ENCODE measurements at regions of chr3 and their contacts with region 1.

Region 1: DNA sequence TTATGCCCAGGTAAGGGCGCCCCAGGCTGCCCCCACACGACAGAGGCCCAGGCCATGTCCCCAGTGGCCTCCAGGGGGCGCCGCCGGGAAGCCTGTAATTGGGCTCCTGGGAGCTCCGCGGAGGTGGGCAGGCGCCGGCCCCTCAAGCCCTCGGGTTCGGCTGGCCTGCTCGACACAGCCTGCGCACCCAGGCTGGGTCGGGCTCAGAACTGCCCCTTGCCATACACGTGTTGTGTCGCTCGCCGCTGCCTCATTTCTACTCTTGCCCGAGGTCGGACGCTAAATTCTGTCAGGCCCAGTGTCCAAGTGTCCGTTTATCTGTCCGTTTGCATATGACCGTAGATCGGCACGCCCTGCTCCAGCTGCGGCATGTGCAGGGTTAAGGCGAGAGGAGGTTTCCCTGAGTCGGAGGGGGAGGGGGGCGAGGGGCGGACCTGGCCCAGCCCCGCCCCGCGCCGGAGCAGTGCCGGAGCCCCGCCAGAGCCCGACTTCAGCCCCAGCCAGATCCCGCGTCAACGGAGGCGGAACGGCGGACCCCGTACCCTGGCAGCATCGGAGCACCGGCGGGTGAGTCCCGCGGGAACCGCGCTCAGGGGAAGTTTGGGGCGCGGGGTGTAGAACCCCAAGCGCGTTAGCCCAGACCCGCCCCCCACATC is at the start of gene KLHDC8B:
- DNase-seq: peak; percentile 91
- CTCF ChIP-seq: peak; percentile 97

Region 2: GRCh38 chr3:48974076-48974864 is 197.0 kb before region 1 on chr3:
- CTCF ChIA-PET with region 1: no interaction called
- POLR2A ChIA-PET with region 1: no interaction called
- DNase-seq: no peak
- CTCF ChIP-seq: no peak

Region 3: DNA sequence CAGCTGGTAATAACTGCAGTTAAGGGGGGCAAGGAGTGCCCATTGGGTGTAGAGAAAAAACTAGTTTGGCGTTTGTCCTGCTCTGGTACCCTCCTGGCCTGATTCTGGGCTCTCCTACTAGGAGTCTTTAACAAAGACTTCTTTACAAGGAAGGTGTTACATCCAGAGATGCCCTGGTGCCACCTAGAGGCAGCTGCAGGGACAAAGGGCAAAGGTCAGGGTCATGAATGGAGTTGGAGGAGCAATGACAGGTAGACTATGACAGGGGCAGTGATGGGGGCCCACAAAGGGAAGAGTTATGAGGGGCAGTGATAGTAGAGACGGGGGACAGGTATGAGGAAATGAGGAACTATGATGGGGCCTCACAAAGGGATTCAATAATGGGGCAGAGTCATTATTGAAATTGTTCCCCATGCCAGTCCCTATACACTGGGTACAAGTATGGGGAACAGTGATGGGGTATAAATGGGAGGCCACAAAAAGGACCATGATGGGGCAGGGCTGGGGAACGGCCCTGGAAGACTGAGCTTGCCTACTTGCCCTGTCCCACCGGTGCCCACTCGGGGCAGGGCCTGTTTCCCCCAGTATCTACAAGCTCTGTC is 13.0 kb before region 1 on chr3:
- CTCF ChIA-PET with region 1: interaction called, 43 read pairs
- POLR2A ChIA-PET with region 1: no interaction called
- DNase-seq: no peak
- CTCF ChIP-seq: peak; percentile 57

Region 4: DNA sequence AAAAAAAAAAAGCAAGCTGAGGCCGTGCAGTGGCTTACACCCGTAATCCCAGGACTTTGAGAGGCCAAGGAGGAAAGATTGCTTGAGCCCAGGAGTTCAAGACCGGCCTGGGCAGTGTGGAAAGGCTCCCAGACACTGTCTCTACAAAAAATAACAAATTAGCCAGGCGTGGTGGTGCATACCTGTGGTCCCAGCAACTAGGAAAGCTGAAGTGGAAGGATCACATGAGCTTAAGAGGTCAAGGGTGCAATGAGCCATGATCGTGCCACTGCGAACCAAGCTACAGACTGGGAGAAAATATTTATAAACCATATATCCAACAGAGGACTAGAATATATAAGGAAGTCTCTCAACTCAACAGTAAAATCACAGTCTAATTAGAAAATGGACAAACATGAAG is 10.1 kb after region 1 on chr3:
- CTCF ChIA-PET with region 1: interaction called, 33 read pairs
- POLR2A ChIA-PET with region 1: no interaction called
- DNase-seq: no peak
- CTCF ChIP-seq: no peak

Region 5: DNA sequence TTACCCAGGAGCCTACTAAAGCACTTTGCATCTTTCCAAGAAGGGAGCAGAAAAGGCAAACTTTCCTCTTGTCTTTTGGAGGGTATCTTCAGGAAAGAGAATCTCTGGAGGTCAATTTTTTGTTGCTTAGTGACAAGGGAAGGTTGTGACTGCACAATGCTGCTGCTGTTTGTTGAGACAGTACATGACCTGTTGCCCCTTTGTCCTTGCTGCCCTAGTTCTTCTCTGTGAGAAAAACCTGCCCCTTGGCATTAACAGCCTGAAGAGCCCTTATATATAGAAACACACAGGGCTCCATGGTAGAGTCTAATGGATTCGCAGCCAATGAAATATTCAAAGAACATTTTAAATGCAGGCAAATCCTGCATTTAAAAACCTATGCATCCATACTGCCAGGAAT is 20.5 kb after region 1 on chr3:
- CTCF ChIA-PET with region 1: interaction called, 12 read pairs
- POLR2A ChIA-PET with region 1: no interaction called
- DNase-seq: no peak
- CTCF ChIP-seq: no peak

Region 6: GRCh38 chr3:49406571-49407566 is 235.6 kb after region 1 on chr3:
- CTCF ChIA-PET with region 1: no interaction called
- POLR2A ChIA-PET with region 1: no interaction called
- DNase-seq: no peak
- CTCF ChIP-seq: no peak

Region 7: GRCh38 chr3:49445381-49445780 is 274.1 kb after region 1 on chr3:
- CTCF ChIA-PET with region 1: interaction called, 56 read pairs
- POLR2A ChIA-PET with region 1: no interaction called
- DNase-seq: no peak
- CTCF ChIP-seq: no peak